ENCODE measurements at regions of chr15 and their contacts with region 1.

Region 1: GRCh38 chr15:25508369-25509002 is 69.7 kb upstream of the UBE3A start:
- DNase-seq: peak; percentile 5
- H3K4me3 ChIP-seq: no peak overlapping the region
- CTCF ChIP-seq: peak; percentile 55

Region 2: GRCh38 chr15:25693321-25694237 is 185.1 kb after region 1 on chr15:
- CTCF ChIA-PET with region 1: interaction called, 21 read pairs
- POLR2A ChIA-PET with region 1: no interaction called
- DNase-seq: no peak
- H3K4me3 ChIP-seq: no peak overlapping the region
- CTCF ChIP-seq: peak; percentile 86

Region 3: DNA sequence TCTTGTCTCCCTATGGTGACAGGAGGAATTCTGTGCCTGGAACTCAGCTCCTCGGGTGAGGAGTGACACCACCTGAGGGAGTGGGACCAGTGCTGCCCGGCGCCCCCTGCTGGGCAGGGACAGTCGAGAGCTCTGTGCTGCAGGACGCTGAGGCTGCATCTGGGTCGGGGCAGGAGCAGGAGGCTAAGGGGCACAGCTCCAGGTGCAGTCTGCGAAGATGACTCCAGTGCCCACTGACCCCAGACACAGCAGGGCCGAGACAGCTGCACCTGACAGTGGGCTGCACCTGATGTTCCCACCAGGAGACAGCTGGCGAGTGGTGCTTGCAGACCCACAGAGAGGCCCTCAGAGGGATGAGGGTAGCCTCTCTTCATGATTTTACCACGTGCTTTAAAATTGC is 201.7 kb after region 1 on chr15:
- CTCF ChIA-PET with region 1: interaction called, 16 read pairs
- POLR2A ChIA-PET with region 1: no interaction called
- DNase-seq: no peak
- H3K4me3 ChIP-seq: no peak overlapping the region
- CTCF ChIP-seq: peak; percentile 87

Region 4: GRCh38 chr15:26260517-26261133 is 752.1 kb after region 1 on chr15:
- CTCF ChIA-PET with region 1: interaction called, 68 read pairs
- POLR2A ChIA-PET with region 1: no interaction called
- DNase-seq: peak; percentile 4
- H3K4me3 ChIP-seq: no peak overlapping the region
- CTCF ChIP-seq: peak; percentile 95

Region 5: GRCh38 chr15:26864664-26865191 is 1356.2 kb after region 1 on chr15:
- CTCF ChIA-PET with region 1: interaction called, 50 read pairs
- POLR2A ChIA-PET with region 1: no interaction called
- DNase-seq: no peak
- H3K4me3 ChIP-seq: no peak overlapping the region
- CTCF ChIP-seq: peak; percentile 59

Measured in AG04449 (cell line).